GM10248 (cell line): ENCODE measurements at regions of chr20 and their contacts with region 1.

Region 1: DNA sequence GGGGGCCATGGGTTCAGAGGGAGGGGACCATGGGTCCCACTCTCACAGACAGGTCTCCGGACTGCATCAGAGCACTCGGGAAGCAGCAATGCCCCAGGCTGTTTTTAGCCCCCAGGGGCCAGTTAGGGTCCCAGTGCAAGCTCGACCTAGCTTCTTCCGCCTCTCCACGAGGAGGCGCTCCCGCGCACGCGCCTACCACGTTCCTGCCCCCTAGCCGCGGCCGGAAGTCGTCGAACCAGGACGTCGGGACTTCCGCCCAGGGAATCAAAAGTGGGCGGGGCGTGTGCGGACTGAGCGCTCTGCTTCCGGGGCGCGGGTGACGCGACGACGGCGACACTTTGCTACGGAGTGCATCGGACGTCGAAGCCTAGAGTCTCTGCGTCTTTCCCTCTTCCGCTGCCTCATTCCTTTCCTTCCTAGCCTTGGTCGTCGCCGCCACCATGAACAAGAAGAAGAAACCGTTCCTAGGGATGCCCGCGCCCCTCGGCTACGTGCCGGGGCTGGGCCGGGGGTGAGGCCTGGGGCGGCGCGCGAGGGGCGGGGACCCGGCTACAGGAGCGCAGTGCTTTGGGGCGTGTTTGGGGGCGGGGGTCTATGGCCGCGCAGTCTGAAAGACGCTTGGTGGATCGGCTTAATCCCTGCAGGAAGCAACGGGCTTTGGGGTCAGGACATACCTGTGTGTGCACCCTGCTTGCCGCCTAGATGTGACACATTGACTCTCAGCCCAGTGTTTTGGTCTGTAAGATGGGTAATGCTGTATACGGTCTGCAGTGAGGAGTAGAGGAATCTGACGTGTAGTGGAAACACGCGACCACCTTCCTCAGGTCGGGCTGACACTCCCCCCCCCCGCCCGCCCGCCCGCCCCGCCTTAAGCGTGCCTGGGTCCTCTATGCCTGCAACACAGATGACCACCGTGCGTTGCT is at the start of gene PRPF6:
- DNase-seq: peak; percentile 98
- CTCF ChIP-seq: peak; percentile 85

Region 2: DNA sequence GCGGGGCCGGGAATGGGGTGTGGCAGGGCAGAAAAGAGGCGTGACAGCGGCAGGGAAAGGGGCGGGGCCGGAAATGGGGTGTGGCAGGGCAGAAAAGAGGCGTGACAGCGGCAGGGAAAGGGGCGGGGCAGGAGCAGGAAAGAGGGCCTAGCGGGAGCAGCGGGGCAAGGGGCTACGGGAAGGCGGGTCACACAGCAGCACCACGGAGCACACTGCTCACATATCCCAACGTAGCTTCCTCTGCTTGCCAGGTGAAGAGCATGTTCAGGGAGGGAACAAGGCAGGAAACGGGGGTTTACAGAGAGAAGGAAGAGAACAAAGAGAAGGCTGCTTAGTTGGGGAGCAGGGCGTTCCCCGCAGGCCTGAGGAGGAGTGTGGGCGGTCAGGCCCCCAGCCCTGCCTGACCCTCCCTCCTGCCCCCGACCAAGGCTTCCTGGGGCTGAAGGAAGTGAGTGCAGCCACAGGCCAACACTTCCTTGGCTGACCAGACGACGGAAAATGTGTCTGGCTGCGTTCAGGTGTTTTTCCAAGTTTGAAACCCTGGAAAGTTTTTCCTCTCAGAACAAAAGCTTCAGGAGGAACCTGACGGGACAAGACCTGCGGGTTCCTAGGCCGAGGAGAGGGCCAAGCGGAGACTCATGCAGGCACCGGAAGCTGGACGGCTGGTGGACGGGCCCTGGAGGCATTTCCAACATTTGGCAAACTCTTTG is 38.7 kb before region 1 on chr20:
- CTCF ChIA-PET with region 1: no interaction called
- POLR2A ChIA-PET with region 1: no interaction called
- DNase-seq: peak; percentile 52
- CTCF ChIP-seq: no peak

Region 3: GRCh38 chr20:64001607-64002011 is 20.5 kb after region 1 on chr20:
- CTCF ChIA-PET with region 1: interaction called, 38 read pairs
- POLR2A ChIA-PET with region 1: interaction called, 5 read pairs
- DNase-seq: no peak
- CTCF ChIP-seq: no peak

Region 4: DNA sequence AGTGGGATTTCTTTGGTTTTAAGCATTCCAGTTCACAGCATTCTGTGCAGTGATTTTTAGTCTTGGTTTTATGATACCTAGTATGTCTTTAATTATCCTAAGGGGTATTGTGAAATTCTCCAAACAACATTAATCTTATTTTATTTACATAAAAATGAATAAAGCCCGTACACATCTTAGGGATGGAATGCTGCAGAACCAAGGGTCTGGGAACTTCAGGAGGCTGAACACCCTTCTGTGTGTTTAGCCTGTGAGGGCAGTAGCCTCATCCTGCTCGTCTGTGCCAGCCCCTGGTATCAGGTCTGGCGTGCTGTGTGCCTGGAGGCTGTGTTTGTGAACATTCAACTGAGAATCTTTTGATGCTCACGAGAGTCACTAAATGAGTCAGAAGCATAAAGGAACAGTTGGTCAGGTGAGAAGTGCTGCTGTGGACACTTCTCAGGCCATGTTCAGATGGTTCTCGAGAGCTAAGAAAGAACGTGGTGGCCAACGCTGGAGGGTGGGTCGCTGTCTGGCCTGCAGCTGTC is 29.7 kb after region 1 on chr20:
- CTCF ChIA-PET with region 1: interaction called, 38 read pairs
- POLR2A ChIA-PET with region 1: interaction called, 3 read pairs
- DNase-seq: no peak
- CTCF ChIP-seq: no peak

Region 5: GRCh38 chr20:64053841-64054661 is 73.0 kb after region 1 on chr20:
- CTCF ChIA-PET with region 1: interaction called, 12 read pairs
- POLR2A ChIA-PET with region 1: no interaction called
- DNase-seq: peak; percentile 62
- CTCF ChIP-seq: peak; percentile 41